ENCODE measurements at regions of chr3 and their contacts with region 1.

Region 1: GRCh38 chr3:45037734-45038455 is 11.8 kb downstream of the CLEC3B start:
- DNase-seq: peak; percentile 94 to 97 (median 95)
- ATAC-seq: peak; percentile 92
- H3K4me3 ChIP-seq: no peak overlapping the region
- H3K27ac ChIP-seq: no peak overlapping the region
- H3K4me1 ChIP-seq: peaks cover 9 to 19% of the 10 kb centered on the region in 2 experiments
- H3K27me3 ChIP-seq: peaks cover 3 to 14% of the 10 kb centered on the region in 2 experiments; a peak in 4 of 5 replicates
- CTCF ChIP-seq: peak; percentile 99
- EP300 ChIP-seq: no peak
- POLR2A ChIP-seq: no peak
- RAD21 ChIP-seq: peak; percentile 99 to 100

Region 2: DNA sequence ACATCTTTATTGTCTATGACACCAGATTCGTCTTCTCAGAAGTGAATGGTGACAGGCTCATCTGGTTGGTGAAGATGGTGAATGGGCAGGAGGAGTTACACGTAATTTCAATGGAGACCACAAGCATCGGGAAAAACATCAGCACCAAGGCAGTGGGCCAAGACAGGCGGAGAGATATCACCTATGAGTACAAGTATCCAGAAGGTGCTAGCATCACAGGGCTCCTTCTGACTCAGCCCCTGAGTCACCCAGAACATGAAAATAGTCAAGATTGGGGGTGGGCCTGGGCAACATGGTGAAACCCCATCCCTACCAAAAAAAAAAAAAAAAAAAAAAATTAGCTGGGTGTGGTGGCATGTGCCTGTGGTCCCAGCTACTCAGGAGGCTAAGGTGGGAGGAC is 130.9 kb before region 1 on chr3:
- CTCF ChIA-PET with region 1: no interaction called
- POLR2A ChIA-PET with region 1: no interaction called
- in situ Hi-C with region 1: no loop called
- intact Hi-C with region 1: no loop called
- DNase-seq: no peak
- ATAC-seq: no peak
- H3K4me3 ChIP-seq: no peak overlapping the region
- H3K27ac ChIP-seq: no peak overlapping the region
- H3K4me1 ChIP-seq: no peaks in the 10 kb centered on the region
- H3K27me3 ChIP-seq: peaks cover 9 to 34% of the 10 kb centered on the region in 2 experiments; a peak in 4 of 5 replicates
- CTCF ChIP-seq: no peak
- EP300 ChIP-seq: no peak
- POLR2A ChIP-seq: no peak
- RAD21 ChIP-seq: no peak

Region 3: DNA sequence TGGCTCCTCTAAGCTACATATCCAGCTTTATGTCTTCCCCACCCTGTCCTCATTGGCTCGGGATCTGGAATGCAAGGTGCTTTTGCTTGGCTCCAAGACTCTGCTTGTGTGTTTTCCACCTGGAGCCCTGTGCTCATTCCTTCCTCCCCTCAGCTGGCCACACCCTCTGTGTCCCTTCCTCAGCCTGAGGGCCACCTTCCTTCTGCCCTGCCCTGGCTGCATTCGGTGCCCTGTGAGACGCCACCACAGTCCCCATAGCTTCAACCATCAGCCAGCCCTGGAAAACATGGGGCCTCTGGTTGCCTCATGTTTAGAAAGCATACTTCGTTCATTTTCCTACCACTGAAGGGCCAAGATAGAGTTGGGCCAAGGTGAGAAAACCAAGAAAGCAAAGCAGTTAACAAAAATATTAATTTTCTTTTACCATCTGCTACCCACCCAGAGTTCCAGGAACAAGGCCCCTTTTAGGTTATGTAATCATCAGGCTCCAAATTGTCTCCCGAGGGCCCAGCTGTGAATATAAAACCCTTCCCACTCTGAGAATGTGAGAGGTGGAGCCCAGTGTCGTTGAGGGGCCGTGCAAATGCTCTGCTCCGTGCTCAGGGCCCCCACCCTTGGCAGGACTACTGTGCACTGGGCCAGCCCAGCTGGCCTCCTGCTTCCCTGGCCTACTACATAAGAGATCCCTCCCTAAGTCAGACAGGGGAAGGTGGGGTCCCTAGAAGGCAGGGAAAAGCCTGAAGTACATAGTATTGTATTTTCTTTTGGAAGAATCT is 16.6 kb before region 1 on chr3:
- CTCF ChIA-PET with region 1: no interaction called
- POLR2A ChIA-PET with region 1: no interaction called
- in situ Hi-C with region 1: no loop called
- intact Hi-C with region 1: no loop called
- DNase-seq: no peak
- ATAC-seq: peak; percentile 42; the same call in 1 of the 3 replicates
- H3K4me3 ChIP-seq: no peak overlapping the region
- H3K27ac ChIP-seq: no peak overlapping the region
- H3K4me1 ChIP-seq: peaks cover 4 to 9% of the 10 kb centered on the region in 2 experiments; a peak in 3 of 5 replicates
- H3K27me3 ChIP-seq: no peaks in the 10 kb centered on the region
- CTCF ChIP-seq: no peak
- EP300 ChIP-seq: no peak
- POLR2A ChIP-seq: no peak
- RAD21 ChIP-seq: no peak

Region 4: DNA sequence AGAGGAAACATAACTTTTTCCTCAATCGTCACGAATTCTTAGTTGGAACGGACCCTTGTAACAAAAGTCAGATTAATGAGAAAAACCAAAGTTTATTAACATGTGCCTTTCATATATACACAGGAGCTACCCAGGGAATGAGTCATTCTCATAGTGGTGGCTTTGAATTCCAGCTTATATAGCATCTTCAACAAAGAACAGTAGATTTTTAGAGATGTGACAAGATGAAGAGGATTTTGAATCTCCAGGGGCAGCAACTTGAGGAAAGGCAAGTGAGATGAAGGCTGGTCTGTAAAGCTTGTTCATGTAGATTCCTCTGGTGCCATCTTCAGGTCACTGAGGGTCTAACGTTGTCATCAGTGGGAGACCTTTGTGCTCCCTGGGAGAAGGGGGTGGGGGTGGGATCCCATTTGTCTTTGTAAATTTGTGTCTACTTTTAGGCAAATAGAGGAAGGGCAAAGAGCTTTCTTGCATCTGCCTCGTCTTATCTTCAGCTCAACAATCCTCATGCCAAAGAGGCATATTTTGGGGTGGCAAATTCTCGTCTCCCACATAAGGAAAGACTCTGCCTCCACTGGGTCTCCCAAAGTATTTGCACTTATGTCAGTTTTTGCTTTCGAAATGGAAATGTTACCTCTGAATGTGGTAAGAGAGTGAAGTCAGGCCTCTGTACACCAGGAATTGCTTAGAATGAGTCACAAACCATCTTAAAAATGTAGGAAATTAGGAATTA is 17.7 kb after region 1 on chr3:
- CTCF ChIA-PET with region 1: interaction called, 4 read pairs
- POLR2A ChIA-PET with region 1: interaction called, 32 read pairs
- in situ Hi-C with region 1: no loop called
- intact Hi-C with region 1: loop called (anchors 1 kb)
- DNase-seq: peak; percentile 58 to 89 (median 68)
- ATAC-seq: peak; percentile 82
- H3K4me3 ChIP-seq: no peak overlapping the region
- H3K27ac ChIP-seq: peak overlapping the region; percentile 32; the same call in 2 of the 3 replicates
- H3K4me1 ChIP-seq: peaks cover 21 to 74% of the 10 kb centered on the region in 2 experiments
- H3K27me3 ChIP-seq: no peaks in the 10 kb centered on the region
- CTCF ChIP-seq: peak; percentile 64 to 82 (median 73); a peak in 5 of 6 replicates
- EP300 ChIP-seq: no peak
- POLR2A ChIP-seq: no peak
- RAD21 ChIP-seq: peak; percentile 72 to 79

Region 5: GRCh38 chr3:45244356-45244755 is 206.5 kb after region 1 on chr3:
- CTCF ChIA-PET with region 1: no interaction called
- POLR2A ChIA-PET with region 1: no interaction called
- in situ Hi-C with region 1: no loop called
- intact Hi-C with region 1: no loop called
- DNase-seq: no peak
- ATAC-seq: no peak
- H3K4me3 ChIP-seq: no peak overlapping the region
- H3K27ac ChIP-seq: no peak overlapping the region
- H3K4me1 ChIP-seq: no peaks in the 10 kb centered on the region; a peak in 1 of 5 replicates
- H3K27me3 ChIP-seq: peaks cover 0 to 8% of the 10 kb centered on the region in 2 experiments; a peak in 1 of 5 replicates
- CTCF ChIP-seq: no peak
- EP300 ChIP-seq: no peak
- POLR2A ChIP-seq: no peak
- RAD21 ChIP-seq: no peak

Region 6: DNA sequence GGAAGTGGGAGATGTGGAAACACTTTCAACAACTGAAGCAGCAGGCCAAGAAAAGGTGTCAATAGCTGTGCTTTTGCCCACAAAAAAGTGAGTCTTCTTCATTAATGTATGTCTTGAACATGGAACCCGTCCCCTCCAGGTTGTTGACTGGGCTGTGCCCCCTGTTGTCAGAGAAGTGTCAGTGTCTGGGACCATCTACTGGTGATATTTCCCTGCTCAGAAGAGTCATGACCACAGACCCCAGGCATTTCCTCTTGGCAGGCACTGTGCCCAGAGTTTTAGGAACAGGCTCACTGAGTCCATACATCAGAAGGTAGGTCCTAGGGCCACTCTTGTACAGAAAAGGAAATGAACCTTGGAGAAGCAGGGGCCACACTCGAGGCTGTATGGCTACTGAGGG is 295.7 kb after region 1 on chr3:
- CTCF ChIA-PET with region 1: interaction called, 8 read pairs
- POLR2A ChIA-PET with region 1: interaction called, 5 read pairs
- in situ Hi-C with region 1: loop called (anchors 5 kb)
- intact Hi-C with region 1: loop called (anchors 2 kb)
- DNase-seq: peak in 2 of 4 experiments; percentile 41 to 49
- ATAC-seq: peak; percentile 81
- H3K4me3 ChIP-seq: no peak overlapping the region
- H3K27ac ChIP-seq: no peak overlapping the region
- H3K4me1 ChIP-seq: peaks cover 0 to 2% of the 10 kb centered on the region in 2 experiments; a peak in 2 of 5 replicates
- H3K27me3 ChIP-seq: peaks cover 47 to 72% of the 10 kb centered on the region in 2 experiments
- CTCF ChIP-seq: peak; percentile 49 to 62 (median 55)
- EP300 ChIP-seq: no peak
- POLR2A ChIP-seq: no peak
- RAD21 ChIP-seq: peak; percentile 24 to 63; a peak in 2 of 4 replicates

Region 7: DNA sequence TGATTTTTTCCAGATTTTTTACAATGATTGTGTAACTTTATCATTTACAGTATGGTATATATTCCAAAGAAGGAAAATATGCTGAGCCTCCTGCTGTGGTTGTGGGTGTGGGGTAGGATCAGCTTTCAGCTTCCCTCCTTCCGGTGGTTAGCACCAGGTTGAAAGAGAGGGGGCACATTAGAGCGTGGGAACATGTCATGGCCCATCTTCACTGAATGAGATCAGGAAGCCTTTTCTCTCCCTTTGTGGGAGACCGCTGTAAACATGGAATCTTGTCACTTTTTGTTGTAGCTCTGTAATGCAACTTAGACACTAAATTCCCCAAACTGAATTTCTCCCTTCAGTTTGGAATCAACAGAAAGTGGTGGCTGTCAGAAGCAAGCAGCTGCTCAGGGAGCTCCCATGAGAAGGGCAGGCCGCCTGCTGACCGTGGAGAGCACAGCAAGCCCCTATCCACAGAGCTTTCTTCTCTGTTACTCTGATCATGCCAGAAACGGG is 470.0 kb after region 1 on chr3:
- CTCF ChIA-PET with region 1: interaction called, 11 read pairs
- POLR2A ChIA-PET with region 1: no interaction called
- in situ Hi-C with region 1: loop called (anchors 5 kb)
- intact Hi-C with region 1: loop called (anchors 2 kb)
- DNase-seq: peak in 3 of 4 experiments; percentile 39 to 59 (median 55)
- ATAC-seq: peak; percentile 89
- H3K4me3 ChIP-seq: no peak overlapping the region
- H3K27ac ChIP-seq: no peak overlapping the region
- H3K4me1 ChIP-seq: 0 out of 5 replicates have a peak, but pooled peaks cover 0 to 6% of the 10 kb centered on the region in 2 experiments
- H3K27me3 ChIP-seq: no peaks in the 10 kb centered on the region
- CTCF ChIP-seq: peak; percentile 59 to 70 (median 62)
- EP300 ChIP-seq: no peak
- POLR2A ChIP-seq: no peak
- RAD21 ChIP-seq: peak; percentile 67 to 80

Region 8: GRCh38 chr3:45938864-45939263 is 901.0 kb after region 1 on chr3:
- CTCF ChIA-PET with region 1: interaction called, 4 read pairs
- POLR2A ChIA-PET with region 1: no interaction called
- in situ Hi-C with region 1: no loop called
- intact Hi-C with region 1: loop called (anchors 10 kb)
- DNase-seq: peak; percentile 74 to 89 (median 79)
- ATAC-seq: peak; percentile 94
- H3K4me3 ChIP-seq: no peak overlapping the region
- H3K27ac ChIP-seq: no peak overlapping the region
- H3K4me1 ChIP-seq: peaks cover 4 to 6% of the 10 kb centered on the region in 2 experiments; a peak in 1 of 5 replicates
- H3K27me3 ChIP-seq: no peaks in the 10 kb centered on the region
- CTCF ChIP-seq: peak; percentile 93 to 96 (median 95)
- EP300 ChIP-seq: no peak
- POLR2A ChIP-seq: no peak
- RAD21 ChIP-seq: peak; percentile 93 to 94

Region 9: DNA sequence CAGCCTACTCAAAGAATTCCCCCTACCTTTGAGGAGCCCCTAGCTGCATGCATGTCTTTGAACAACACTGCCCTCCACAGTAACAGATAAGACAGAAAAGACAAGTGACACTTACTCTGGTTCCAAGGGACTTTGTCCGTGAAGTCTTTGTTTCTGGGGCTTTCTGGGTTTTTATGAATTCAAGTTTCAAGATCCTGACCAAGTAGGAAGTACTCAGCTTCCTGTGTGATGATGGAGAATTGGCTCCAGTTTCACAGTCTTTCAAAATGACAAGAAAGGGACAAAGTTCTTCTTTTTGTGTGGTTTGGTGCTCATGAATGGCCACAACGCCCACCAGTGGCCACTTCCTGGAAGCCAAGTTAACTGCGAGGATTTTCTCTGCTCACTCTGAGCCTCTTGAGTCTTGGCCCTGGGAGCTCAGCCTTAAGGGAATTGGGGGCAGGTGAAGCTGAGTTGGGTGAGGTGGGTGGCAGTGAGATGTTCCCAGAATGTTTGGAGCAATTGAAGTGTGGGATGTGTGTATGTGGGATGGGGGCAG is 1170.3 kb after region 1 on chr3 and contains the start of gene CCR1:
- CTCF ChIA-PET with region 1: no interaction called
- POLR2A ChIA-PET with region 1: no interaction called
- in situ Hi-C with region 1: no loop called
- intact Hi-C with region 1: loop called (anchors 10 kb)
- DNase-seq: peak in 2 of 4 experiments; percentile 27 to 41
- ATAC-seq: peak; percentile 89
- H3K4me3 ChIP-seq: no peak within 1 kb of the TSS
- H3K27ac ChIP-seq: no peak within 1 kb of the TSS
- H3K4me1 ChIP-seq: no peaks in the 10 kb centered on the region
- H3K27me3 ChIP-seq: peaks cover 0 to 13% of the 10 kb centered on the region in 2 experiments; a peak in 3 of 5 replicates
- CTCF ChIP-seq: peak; percentile 73 to 81 (median 76)
- EP300 ChIP-seq: no peak
- POLR2A ChIP-seq: no peak
- RAD21 ChIP-seq: peak; percentile 73 to 75
- polyA plus RNA-seq, gene CCR1: not detected